ENCODE measurements at regions of chr6 and their contacts with region 1.

Region 1: DNA sequence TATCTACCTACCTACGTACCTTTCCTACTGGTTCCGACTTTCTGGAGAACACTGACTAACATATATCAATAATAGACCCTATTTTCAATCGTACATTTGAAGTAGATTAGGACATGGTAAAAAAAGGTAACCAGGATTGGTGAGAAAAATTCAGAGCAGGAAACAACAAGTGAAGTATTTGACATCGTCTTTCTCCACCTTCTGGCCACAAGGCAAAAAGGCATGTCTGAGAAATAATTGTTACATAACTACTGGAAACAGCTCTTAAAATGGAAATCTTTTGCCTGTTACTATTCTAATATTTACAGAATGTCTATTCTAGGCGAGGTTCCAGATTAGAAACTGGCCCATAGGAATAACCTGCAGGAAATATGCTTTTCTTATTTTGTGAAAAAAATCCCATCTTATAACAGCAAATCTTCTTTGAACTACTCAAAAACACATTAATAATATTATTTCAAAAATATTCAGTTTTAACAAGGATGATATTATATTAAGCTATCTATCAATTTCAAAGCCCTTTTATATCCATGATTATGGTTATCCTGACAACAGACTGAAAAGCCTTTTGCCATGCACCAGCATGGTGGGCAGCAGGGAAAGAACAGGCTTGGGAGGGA is 80.8 kb downstream of the RCAN2 start:
- DNase-seq: peak in 3 of 5 donors; percentile 3 to 45 (median 40)
- H3K4me3 ChIP-seq: no peak overlapping the region
- H3K4me3 Mint-ChIP-seq: no peak overlapping the region
- H3K27ac ChIP-seq: no peak overlapping the region
- H3K27ac Mint-ChIP-seq: no peak overlapping the region
- H3K4me1 ChIP-seq: no peaks in the 10 kb centered on the region
- H3K4me1 Mint-ChIP-seq: no peaks in the 10 kb centered on the region
- H3K27me3 ChIP-seq: no peaks in the 10 kb centered on the region
- H3K27me3 Mint-ChIP-seq: peaks cover 0 to 8% of the 10 kb centered on the region in 2 donors

Region 2: DNA sequence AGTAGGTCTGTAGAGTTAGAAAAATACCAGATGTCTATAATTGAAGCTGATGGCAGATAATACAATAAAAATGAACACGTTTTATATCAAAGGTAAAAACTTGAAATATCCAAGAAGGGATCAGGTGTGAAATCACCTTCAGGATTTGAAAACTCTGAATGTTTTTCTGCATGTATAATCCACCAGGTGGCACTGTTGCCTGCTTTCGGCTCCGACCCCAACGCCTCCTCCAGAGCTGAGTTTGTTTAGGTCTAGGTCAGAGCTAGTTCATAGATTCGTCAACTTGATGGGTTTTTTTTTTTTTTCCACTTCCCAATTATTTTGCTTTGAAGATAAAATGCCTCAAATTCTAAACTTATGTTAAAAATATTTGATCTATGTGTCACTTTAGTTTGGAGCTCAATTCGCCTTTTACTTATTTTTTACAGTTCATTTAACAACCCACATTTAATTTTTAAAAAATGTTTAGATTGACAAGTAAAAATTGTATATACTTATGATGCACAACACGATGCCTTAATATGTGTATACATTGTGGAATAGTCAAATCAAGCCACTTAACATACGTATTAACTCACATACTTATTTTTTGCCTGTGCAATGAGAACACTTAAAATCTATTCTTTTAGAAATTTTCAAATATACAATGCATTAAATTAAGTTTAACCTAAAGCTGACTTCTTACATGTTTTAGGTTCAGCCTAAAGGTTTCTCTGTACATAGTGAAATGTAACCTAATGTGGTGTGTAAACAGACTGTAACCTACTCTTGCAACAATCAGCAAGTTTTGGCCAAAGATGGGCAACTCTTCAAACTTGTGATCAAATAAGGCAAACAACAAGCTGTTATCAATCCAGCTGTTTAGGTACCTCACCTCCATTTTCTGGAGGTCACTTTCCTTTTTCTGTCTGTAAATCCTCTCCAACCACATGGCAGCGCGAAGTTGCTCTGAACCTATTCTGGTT is 320.0 kb before region 1 on chr6:
- CTCF ChIA-PET with region 1: interaction called, 33 read pairs
- POLR2A ChIA-PET with region 1: no interaction called
- DNase-seq: peak; percentile 26 to 73 (median 40)
- H3K4me3 ChIP-seq: no peak overlapping the region
- H3K4me3 Mint-ChIP-seq: no peak overlapping the region
- H3K27ac ChIP-seq: no peak overlapping the region
- H3K27ac Mint-ChIP-seq: no peak overlapping the region
- H3K4me1 ChIP-seq: no peaks in the 10 kb centered on the region
- H3K4me1 Mint-ChIP-seq: no peaks in the 10 kb centered on the region
- H3K27me3 ChIP-seq: no peaks in the 10 kb centered on the region
- H3K27me3 Mint-ChIP-seq: peaks cover 16 to 27% of the 10 kb centered on the region in 2 donors

Region 3: DNA sequence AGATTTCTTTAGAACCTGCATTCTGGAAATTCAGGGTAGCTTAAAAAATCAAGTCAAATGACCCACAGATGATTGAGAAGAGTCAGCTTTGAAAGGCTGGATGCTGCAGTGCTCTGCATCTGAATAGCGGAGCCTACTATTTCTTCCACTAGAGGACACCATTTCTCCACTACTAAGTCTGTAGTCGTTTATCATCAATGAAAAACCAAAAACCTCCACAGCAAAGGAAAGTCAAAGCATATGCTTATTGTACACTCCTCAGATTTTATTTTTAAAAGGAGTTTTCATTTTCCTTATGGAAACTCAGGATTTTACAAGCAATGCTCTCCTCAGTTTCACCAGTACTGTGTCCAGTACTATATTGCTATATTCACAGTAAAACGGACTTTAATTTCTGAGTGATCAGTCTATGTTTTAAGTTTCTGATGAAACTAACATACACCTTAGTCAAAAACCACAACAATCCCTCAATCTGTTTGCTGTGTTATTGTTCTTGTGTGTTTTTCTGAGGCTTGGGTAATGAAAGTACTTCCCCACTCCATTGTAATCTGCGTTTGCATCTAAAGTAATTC is 189.1 kb before region 1 on chr6:
- CTCF ChIA-PET with region 1: interaction called, 16 read pairs
- POLR2A ChIA-PET with region 1: no interaction called
- DNase-seq: peak in 1 of 5 donors; percentile 21
- H3K4me3 ChIP-seq: no peak overlapping the region
- H3K4me3 Mint-ChIP-seq: no peak overlapping the region
- H3K27ac ChIP-seq: no peak overlapping the region
- H3K27ac Mint-ChIP-seq: no peak overlapping the region
- H3K4me1 ChIP-seq: no peaks in the 10 kb centered on the region
- H3K4me1 Mint-ChIP-seq: no peaks in the 10 kb centered on the region
- H3K27me3 ChIP-seq: no peaks in the 10 kb centered on the region
- H3K27me3 Mint-ChIP-seq: no peaks in the 10 kb centered on the region

Region 4: GRCh38 chr6:46347669-46348068 is 62.8 kb before region 1 on chr6:
- CTCF ChIA-PET with region 1: no interaction called
- POLR2A ChIA-PET with region 1: no interaction called
- DNase-seq: no peak
- H3K4me3 ChIP-seq: no peak overlapping the region
- H3K4me3 Mint-ChIP-seq: no peak overlapping the region
- H3K27ac ChIP-seq: no peak overlapping the region
- H3K27ac Mint-ChIP-seq: no peak overlapping the region
- H3K4me1 ChIP-seq: no peaks in the 10 kb centered on the region
- H3K4me1 Mint-ChIP-seq: no peaks in the 10 kb centered on the region
- H3K27me3 ChIP-seq: no peaks in the 10 kb centered on the region
- H3K27me3 Mint-ChIP-seq: peaks cover 0 to 9% of the 10 kb centered on the region in 2 donors